ENCODE measurements at regions of chr17 and their contacts with region 1.

Region 1: GRCh38 chr17:40457964-40458791 is 14.9 kb downstream of the IGFBP4 start:
- DNase-seq: peak; percentile 99
- H3K4me3 Mint-ChIP-seq: peak overlapping the region; percentile 13
- H3K27ac Mint-ChIP-seq: no peak overlapping the region
- H3K4me1 Mint-ChIP-seq: peaks cover 33% of the 10 kb centered on the region
- H3K27me3 Mint-ChIP-seq: peaks cover 29% of the 10 kb centered on the region
- CTCF ChIP-seq: no peak

Region 2: GRCh38 chr17:40378966-40379365 is 79.2 kb before region 1 on chr17:
- CTCF ChIA-PET with region 1: no interaction called
- intact Hi-C with region 1: no loop called
- DNase-seq: no peak
- H3K4me3 Mint-ChIP-seq: no peak overlapping the region
- H3K27ac Mint-ChIP-seq: no peak overlapping the region
- H3K4me1 Mint-ChIP-seq: no peaks in the 10 kb centered on the region
- H3K27me3 Mint-ChIP-seq: no peaks in the 10 kb centered on the region
- CTCF ChIP-seq: no peak

Region 3: DNA sequence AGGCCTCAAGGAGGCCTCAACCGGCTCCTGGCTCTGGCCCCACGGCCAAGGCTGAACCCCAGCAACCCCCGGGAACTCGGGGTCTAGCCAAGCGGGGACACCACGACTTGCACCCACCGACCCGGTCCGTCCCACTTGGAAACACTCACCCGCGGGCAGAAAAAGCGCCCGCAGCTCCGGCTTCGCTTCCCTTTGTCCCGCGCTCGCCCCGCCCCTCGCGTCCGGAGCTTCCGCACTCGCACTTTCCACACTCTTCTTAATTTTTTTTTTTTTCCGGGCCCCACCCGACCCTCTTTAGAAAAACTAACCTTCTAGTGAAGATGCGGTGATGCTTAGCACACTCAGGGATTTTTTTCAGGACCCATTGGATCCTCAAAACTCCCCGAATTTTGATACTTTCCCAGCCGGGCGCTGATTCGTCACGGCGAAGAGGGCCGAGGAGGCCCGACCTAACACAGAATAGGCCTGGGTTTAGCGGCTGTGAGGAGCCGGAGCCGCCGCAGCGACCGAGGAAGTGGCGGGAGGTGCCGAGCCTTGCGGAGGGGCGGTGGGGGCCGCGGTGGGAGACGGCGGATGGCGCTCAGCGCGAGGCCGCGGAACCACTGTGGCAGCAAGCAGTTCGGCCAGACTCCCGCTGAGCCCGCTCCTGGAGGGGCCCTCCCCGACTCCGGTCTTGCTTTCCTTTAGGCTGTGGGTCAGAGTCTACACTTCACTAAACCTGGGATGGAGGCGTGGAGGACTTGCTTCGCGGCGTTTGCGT is 189.6 kb after region 1 on chr17 and contains the start of gene SMARCE1:
- CTCF ChIA-PET with region 1: no interaction called
- intact Hi-C with region 1: no loop called
- DNase-seq: peak; percentile 98
- H3K4me3 Mint-ChIP-seq: peak within 1 kb of the TSS; percentile 74
- H3K27ac Mint-ChIP-seq: peak within 1 kb of the TSS; percentile 87
- H3K4me1 Mint-ChIP-seq: peaks cover 29% of the 10 kb centered on the region
- H3K27me3 Mint-ChIP-seq: no peaks in the 10 kb centered on the region
- CTCF ChIP-seq: no peak
- total RNA-seq, gene SMARCE1: 755 and 768 TPM in 2 replicates

Region 4: GRCh38 chr17:40992666-40993065 is 534.5 kb after region 1 on chr17:
- CTCF ChIA-PET with region 1: interaction called, 11 read pairs
- intact Hi-C with region 1: no loop called
- DNase-seq: no peak
- H3K4me3 Mint-ChIP-seq: no peak overlapping the region
- H3K27ac Mint-ChIP-seq: no peak overlapping the region
- H3K4me1 Mint-ChIP-seq: peaks cover 16% of the 10 kb centered on the region
- H3K27me3 Mint-ChIP-seq: no peaks in the 10 kb centered on the region
- CTCF ChIP-seq: no peak

Region 5: DNA sequence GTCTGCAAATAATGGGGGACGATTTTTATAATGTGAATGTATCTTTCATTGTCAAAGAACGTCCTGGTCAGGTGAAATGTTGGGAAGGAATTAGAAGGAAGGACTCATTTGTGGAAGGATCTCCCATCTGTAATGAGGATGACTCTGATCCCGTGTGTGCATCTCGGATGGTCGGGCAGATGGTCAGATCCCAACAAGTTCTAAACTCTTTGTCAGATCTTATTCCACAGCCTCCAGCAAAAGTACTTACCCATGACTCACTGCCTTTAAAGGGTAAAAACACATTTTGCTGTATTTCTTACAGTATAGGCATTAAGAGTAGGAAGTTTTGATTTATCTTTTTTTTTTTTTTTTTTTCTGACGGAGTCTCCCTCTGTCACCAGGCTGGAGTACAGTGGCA is 640.3 kb after region 1 on chr17:
- CTCF ChIA-PET with region 1: no interaction called
- intact Hi-C with region 1: no loop called
- DNase-seq: no peak
- H3K4me3 Mint-ChIP-seq: no peak overlapping the region
- H3K27ac Mint-ChIP-seq: no peak overlapping the region
- H3K4me1 Mint-ChIP-seq: peaks cover 54% of the 10 kb centered on the region
- H3K27me3 Mint-ChIP-seq: no peaks in the 10 kb centered on the region
- CTCF ChIP-seq: no peak